ENCODE measurements at regions of chr7 and their contacts with region 1.

Region 1: GRCh38 chr7:141354251-141354650 is 197.0 kb upstream of the AGK start:
- DNase-seq: no peak
- ATAC-seq: no peak
- H3K4me3 ChIP-seq: no peak overlapping the region
- H3K27ac ChIP-seq: no peak overlapping the region
- H3K4me1 ChIP-seq: no peaks in the 10 kb centered on the region
- H3K27me3 ChIP-seq: no peaks in the 10 kb centered on the region
- CTCF ChIP-seq: no peak

Region 2: GRCh38 chr7:141441837-141442627 is 87.8 kb after region 1 on chr7:
- intact Hi-C with region 1: loop called in 1 of 2 experiments (anchors 5 kb)
- DNase-seq: peak in 1 of 2 donors; percentile 58
- ATAC-seq: peak; percentile 82 to 94 (median 86)
- H3K4me3 ChIP-seq: no peak overlapping the region
- H3K27ac ChIP-seq: no peak overlapping the region
- H3K4me1 ChIP-seq: no peaks in the 10 kb centered on the region
- H3K27me3 ChIP-seq: no peaks in the 10 kb centered on the region
- CTCF ChIP-seq: no peak